MCF 10A (cell line): ENCODE measurements at regions of chr12 and their contacts with region 1.

Region 1: DNA sequence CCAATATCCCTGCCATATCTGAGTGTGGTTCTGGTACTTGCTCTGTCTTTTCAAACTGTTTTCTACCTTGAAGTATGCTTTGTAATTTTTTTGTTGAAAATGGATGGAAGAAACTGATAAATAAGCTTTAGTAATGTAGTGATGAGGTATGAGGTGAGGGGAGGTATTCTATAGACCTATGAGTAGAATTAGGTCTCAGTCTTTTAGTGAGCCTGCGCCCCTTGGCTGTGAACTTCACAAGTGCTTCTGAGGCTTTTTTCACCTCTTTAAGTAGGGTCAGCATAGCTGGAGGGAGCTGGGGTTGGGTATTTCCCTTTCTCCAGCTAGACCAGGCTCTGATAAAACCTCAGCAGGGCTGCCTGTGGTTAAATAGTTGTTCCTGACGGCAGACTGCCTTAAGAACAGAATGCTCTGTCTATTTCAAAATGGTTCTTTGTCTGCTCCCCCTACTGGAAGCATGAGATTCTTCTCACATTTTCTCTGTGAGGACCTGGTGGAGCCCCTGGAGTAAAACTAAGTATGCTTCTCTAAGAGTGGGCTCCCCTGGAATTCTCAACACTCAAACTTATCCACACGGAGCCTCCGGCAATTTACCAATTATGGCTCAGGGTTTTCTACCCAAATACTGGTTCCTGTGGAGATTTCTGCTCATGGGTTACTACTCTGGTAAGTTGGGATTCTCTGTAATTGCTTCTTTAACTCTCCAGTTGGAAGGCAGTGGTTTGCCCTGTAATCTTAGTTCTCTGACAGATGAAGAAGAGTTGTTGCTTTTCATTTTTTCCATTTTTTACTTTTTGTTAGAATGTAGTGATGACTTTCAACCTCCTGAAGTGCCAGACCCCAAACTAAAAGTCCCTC is 13.1 kb downstream of the KRT5 start:
- DNase-seq: peak; percentile 75
- H3K4me3 Mint-ChIP-seq: no peak overlapping the region
- H3K27ac Mint-ChIP-seq: peak overlapping the region; percentile 4
- H3K4me1 Mint-ChIP-seq: peaks cover 18% of the 10 kb centered on the region
- H3K27me3 Mint-ChIP-seq: no peaks in the 10 kb centered on the region
- CTCF ChIP-seq: peak; percentile 50

Region 2: DNA sequence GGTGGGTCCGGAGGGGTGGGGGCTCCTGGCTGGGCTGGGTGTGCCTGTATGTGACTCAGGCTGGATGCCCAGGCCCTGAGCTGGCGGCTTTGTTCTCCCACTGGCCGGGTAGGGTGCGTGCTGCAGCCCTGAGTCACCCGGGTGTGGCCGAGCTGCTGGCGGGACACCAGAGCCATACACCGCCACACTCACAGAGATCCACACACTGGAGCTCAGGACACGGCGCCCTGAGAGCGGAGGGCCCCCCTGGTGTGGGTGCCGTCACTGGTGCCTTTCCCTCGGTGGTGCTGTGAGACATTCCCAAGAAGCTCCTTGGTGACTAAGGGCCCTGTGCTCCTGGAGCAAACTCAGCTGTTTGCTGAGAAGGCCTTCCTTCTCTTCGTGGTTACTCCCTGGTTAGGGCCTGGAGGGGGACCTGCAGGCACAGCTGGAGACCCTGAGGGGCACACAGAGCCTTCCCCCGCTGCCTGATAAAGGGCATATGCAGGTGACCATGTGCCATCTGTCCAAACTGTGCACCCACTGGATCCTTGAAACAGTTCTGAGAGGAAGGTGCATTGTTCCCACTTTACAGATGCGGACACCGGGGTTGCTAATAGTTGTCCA is 359.6 kb before region 1 on chr12:
- CTCF ChIA-PET with region 1: interaction called, 12 read pairs
- POLR2A ChIA-PET with region 1: interaction called, 373 read pairs
- intact Hi-C with region 1: no loop called
- DNase-seq: peak; percentile 98
- H3K4me3 Mint-ChIP-seq: peak overlapping the region; percentile 39
- H3K27ac Mint-ChIP-seq: peak overlapping the region; percentile 97
- H3K4me1 Mint-ChIP-seq: peaks cover 76% of the 10 kb centered on the region
- H3K27me3 Mint-ChIP-seq: no peaks in the 10 kb centered on the region
- CTCF ChIP-seq: no peak

Region 3: DNA sequence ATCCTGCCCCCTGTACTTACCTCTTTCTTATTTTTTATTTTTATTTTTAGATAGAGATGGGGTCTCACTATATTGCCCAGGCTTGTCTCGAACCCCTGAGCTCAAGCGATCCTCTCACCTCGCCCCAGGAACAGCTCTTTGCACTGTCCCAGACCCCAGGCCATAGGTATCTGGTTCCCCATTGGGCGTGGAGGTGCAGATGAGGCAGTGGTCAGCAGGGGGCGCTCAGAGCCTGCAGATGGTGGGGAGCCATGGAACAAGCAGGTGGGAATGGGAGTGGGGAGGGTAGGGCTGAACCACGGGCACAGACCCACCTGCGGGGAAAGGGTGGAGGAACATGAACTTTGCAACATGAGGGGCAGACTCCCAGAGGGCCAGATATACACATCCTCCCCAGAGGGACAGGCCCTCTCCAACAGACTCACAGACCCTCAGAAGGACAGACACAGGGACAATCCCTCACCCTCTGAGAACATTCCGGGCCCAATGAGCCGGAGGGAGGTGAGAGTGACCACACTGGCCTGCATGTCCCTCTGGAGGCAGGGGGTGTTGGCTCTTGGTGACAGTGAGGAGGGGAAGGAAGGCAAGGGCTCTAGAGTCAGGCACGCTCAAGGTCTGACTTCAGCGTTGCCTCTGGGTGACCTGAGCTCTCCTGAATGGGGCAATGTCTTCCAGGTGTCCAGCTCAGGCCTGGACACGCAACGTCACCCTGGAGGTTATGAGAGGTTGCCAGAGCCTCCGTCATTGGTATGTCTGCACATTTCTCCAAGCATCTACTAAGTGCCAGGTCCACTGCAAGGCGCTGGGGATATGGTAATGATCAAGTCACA is 350.1 kb before region 1 on chr12:
- CTCF ChIA-PET with region 1: interaction called, 16 read pairs
- POLR2A ChIA-PET with region 1: interaction called, 373 read pairs
- intact Hi-C with region 1: no loop called
- DNase-seq: peak; percentile 85
- H3K4me3 Mint-ChIP-seq: no peak overlapping the region
- H3K27ac Mint-ChIP-seq: peak overlapping the region; percentile 91
- H3K4me1 Mint-ChIP-seq: peaks cover 30% of the 10 kb centered on the region
- H3K27me3 Mint-ChIP-seq: no peaks in the 10 kb centered on the region
- CTCF ChIP-seq: peak; percentile 98

Region 4: GRCh38 chr12:52380271-52380694 is 126.8 kb before region 1 on chr12:
- CTCF ChIA-PET with region 1: interaction called, 34 read pairs
- POLR2A ChIA-PET with region 1: interaction called, 5 read pairs
- intact Hi-C with region 1: no loop called
- DNase-seq: peak; percentile 59
- H3K4me3 Mint-ChIP-seq: no peak overlapping the region
- H3K27ac Mint-ChIP-seq: no peak overlapping the region
- H3K4me1 Mint-ChIP-seq: no peaks in the 10 kb centered on the region
- H3K27me3 Mint-ChIP-seq: no peaks in the 10 kb centered on the region
- CTCF ChIP-seq: peak; percentile 59

Region 5: GRCh38 chr12:52442600-52443061 is 64.5 kb before region 1 on chr12:
- CTCF ChIA-PET with region 1: interaction called, 3 read pairs
- POLR2A ChIA-PET with region 1: interaction called, 3 read pairs
- intact Hi-C with region 1: loop called (anchors 5 kb)
- DNase-seq: peak; percentile 98
- H3K4me3 Mint-ChIP-seq: no peak overlapping the region
- H3K27ac Mint-ChIP-seq: no peak overlapping the region
- H3K4me1 Mint-ChIP-seq: peaks cover 35% of the 10 kb centered on the region
- H3K27me3 Mint-ChIP-seq: no peaks in the 10 kb centered on the region
- CTCF ChIP-seq: no peak

Region 6: DNA sequence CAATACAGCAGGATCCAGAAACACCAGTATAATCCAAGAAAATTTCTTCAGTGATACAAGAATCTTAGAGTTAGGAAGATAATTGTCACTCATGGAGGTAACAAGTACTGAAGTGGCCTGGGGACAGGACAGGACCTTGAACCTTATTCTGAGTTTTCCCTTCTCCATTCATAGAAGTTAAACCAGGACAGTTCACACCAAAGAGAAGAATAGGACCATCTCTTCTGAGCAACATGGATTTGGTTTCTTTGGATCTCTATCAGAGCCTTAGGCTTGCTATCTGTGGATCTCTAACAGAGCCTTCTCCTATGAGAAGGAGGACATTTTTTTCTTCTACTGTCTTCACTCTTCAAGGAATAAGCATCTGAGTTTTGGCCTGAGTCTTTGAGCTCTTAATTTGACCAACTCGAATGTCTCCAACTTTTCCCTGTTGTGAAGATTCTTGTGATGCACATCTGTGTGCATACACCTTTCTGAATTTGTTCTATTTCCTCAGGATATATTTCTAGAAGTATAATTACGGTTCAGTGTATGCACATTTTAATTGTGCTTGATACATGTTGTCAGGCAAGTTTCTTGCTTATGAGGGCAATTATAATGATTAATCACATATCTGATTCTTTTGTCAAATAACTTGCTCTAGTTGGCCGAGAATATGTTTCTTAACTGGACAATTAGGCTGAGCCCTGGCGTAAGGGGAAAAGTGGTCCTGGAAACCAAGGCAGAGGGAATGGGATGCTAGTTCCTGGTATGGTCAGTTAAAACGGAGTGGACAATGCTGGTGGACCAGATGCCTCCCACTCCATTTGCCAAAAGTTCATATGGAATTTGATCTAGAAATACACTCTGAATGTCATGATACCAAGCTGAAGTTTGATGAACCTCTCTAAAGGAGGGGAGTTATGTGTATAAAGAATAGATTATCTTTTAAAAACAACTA is 20.7 kb before region 1 on chr12:
- CTCF ChIA-PET with region 1: interaction called, 19 read pairs
- POLR2A ChIA-PET with region 1: interaction called, 1,235 read pairs
- intact Hi-C with region 1: no loop called
- DNase-seq: peak; percentile 29
- H3K4me3 Mint-ChIP-seq: peak overlapping the region; percentile 21
- H3K27ac Mint-ChIP-seq: peak overlapping the region; percentile 50
- H3K4me1 Mint-ChIP-seq: peaks cover 19% of the 10 kb centered on the region
- H3K27me3 Mint-ChIP-seq: no peaks in the 10 kb centered on the region
- CTCF ChIP-seq: no peak